Posterior cingulate gyrus (tissue), 11 donors: ENCODE measurements at regions of chr11 and their contacts with region 1.

Region 1: DNA sequence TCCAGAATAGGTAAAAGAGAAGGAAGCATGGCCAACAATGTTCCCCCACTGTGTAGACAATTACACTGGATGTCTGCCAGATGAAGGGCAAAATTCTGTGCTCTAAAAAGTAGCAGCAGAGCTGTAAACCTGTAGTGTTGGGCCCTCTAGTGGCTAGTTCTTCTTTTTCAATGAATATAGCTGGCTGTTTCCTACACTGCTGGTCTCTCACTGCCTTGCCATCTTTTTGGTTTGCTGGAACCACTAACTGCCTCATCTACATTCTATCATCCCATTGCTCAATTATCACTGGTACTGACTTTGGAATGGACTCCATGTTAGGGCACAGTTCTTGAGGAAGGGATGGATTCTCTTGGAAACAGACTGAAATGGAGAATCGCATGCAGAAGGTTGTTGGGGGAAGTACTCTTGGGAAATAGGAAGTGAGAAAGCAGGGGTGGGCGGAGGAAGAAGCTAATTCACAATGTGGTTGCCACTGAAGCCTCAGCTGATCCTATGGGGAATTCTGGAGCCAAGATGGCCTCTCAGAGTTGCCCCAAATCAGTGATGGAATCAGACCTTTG is 17.9 kb downstream of the KCNE3 start:
- DNase-seq: peak in 2 of 10 donors; percentile 12 to 28

Region 2: DNA sequence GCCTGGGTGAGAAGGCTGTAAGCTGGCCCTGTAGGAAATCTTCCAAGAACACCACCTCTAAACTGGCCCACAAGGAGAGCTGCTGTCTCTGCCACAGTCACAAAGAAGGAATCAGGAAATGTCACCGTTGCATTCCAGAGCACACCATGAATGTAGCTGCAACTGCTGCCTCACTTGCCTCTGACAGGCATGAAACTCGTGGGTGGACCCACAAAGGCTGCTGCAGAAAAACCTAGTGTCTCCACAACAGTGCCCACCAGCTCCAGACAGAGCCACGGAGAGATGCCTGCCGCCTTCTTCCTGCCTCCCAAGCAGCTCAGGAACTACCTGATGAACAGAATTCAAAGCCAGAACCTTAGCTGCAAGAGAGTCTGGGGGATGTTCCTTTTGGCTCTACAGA is 488.1 kb before region 1 on chr11:
- intact Hi-C with region 1: loop called (anchors 5 kb)
- DNase-seq: peak in 6 of 10 donors; percentile 29 to 87 (median 71)

Region 3: DNA sequence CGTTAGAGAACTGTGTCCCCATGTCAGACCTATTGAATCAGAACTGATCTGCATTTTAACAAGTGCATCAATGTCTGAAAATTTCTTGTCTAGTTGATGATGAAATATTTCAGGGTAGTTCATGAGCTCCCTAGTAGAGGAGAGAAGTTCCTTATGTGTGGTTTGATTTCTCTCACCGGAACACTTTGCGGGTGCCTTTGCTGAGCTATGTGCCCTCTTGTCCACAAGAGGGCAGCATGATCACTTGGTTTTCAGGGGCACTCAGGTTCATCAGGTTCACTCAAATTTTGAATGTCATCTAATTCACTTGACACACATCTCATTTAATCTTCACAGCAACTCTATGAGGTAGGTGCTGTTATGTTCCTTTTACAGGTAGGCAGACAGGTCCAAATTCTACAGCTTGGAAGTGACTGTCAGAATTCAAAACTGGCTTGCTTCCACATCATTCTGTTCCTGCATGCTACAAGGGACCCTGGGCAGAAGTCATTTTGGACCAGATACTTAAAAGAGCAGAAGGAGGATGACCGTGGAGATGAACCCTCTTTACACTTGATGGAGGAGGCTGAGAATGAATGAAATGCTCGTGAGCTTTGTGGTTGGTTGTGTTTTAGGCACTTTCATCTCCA is 193.6 kb before region 1 on chr11:
- intact Hi-C with region 1: loop called (anchors 2 kb)
- DNase-seq: peak in 7 of 10 donors; percentile 14 to 91 (median 46)

Region 4: DNA sequence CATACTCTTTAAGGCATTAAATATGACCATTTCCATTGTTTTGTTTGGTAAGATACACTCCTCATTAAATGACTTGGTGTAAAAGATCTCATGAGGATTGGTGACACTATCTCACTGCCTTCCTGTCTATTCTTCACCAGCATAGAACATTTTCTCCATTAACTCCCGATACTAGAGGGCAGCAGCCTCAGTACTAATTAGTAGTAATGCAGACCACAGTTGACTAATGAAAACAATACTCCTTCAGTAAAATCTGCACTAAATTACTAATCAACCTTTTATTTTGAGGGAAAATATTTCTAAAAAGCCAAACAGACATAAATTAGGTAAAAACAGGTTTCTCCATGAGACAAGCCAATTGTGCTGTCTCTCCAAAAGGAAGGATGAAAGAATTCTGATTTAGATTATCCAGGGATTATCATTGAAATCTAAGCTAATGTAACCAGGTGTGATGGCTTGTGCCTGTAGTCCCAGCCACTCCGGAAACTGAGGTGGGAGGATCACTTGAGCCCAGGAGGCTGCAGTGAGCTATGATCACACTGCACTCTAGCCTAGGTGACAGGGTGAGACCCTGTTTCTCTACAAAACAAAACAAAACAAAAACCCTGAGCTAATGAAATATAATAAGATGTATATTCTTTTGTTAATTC is 60.6 kb before region 1 on chr11:
- intact Hi-C with region 1: loop called (anchors 1 kb)
- DNase-seq: peak in 4 of 10 donors; percentile 27 to 69 (median 50)

Region 5: DNA sequence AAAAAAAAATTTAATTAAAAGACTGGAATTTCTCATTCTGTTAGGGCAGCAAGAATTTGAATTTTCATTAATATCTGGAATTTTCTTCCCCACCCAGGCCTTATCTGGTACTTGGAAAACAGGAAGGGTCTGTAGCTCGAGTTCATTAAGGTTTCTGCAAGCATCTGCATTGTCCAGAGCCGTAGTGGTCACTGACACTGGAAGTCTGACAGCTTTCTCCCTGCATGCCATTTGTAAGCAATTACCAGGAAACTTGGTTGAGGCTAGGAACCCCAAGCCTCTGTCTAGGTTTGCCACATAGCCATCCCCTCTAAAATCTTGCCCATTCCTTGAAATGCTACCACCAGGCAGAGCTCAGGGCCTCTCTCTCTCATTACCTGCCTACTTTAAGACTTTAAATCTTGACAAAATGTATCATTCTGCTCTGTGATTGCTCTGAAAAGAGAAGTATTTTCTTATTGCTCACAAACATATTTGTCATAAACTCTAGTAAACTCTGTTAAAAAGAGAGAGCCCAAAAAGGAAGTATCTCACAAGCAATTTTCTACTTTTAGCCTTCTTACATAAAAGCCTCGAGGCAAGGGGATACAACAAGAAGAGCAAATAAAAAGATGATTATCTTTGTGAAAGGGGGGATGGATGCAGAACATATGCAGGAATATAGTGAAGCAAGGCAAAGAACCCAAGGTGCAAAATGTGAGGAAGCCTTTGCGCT is 45.7 kb before region 1 on chr11:
- intact Hi-C with region 1: no loop called
- DNase-seq: no peak

Region 6: DNA sequence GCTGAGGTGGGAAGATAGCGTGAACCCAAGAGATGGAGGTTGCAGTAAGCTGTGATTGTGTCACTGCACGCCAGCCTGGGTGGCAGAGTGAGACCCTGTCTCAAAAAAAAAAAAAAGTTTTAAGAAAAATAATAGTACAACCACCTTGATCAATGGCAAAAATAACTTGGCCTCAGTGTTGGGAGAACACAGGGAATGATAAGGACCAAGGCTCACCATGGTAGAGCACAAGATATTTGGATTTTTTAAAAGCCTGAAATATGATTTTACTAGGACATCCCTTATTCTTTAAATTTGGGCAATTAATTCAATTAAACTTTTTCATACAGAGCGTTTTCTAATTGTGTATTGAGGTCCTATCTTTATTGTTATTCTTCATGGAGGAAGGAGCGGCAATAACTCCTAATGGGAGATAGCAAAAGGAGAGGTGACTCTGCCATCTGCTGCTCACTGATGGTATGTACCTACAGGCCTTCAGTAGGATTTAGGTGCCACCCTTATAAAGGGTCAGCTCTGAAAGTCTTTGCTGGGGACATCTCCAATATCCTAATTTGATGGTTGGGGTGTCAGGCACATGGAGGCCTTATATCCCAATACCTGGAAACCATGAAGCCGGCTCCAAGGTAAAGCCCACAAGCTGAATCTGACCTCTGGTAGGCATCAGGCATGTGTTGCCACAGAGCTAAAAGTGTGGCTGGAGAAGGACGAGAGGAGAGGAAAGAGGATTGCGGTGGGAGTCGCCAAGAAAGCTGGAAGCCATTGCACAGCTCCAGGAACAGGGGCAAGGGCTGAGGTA is 121.0 kb after region 1 on chr11:
- intact Hi-C with region 1: loop called (anchors 2 kb)
- DNase-seq: peak in 4 of 10 donors; percentile 18 to 36 (median 20)

Region 7: GRCh38 chr11:74581954-74582547 is 132.6 kb after region 1 on chr11:
- intact Hi-C with region 1: no loop called
- DNase-seq: no peak

Region 8: GRCh38 chr11:74726547-74727182 is 277.2 kb after region 1 on chr11:
- intact Hi-C with region 1: loop called (anchors 10 kb)
- DNase-seq: peak; percentile 49 to 96 (median 70)